ENCODE measurements at regions of chr6 and their contacts with region 1.

Region 1: GRCh38 chr6:153947808-153948447 is 91.1 kb upstream of the OPRM1 start:
- H3K4me3 ChIP-seq: no peak overlapping the region
- H3K27ac ChIP-seq: no peak overlapping the region
- H3K4me1 ChIP-seq: no peaks in the 10 kb centered on the region
- CTCF ChIP-seq: no peak

Region 2: DNA sequence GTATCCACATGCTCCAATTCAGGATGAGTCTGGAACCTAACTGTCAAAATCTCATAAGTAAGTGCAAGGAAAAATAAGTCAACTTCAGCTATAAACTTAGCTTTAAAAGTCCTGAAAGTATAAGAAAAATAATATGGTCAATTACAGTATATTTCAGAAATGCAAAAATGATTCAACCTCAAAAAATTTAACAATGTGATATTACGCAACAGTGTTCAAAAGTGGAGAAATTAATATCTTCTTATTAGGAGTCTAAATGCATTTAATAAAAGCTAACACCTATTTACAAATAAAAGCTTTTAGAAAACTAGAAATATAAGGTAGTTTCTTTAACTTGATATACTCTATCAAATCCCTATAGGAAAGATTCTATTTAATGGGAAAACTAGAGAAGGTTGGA is 20.1 kb before region 1 on chr6:
- CTCF ChIA-PET with region 1: interaction called, 11 read pairs
- POLR2A ChIA-PET with region 1: no interaction called
- H3K4me3 ChIP-seq: no peak overlapping the region
- H3K27ac ChIP-seq: no peak overlapping the region
- H3K4me1 ChIP-seq: no peaks in the 10 kb centered on the region
- CTCF ChIP-seq: no peak

Region 3: GRCh38 chr6:153960281-153960680 is 12.4 kb after region 1 on chr6:
- CTCF ChIA-PET with region 1: interaction called, 13 read pairs
- POLR2A ChIA-PET with region 1: no interaction called
- H3K4me3 ChIP-seq: no peak overlapping the region
- H3K27ac ChIP-seq: no peak overlapping the region
- H3K4me1 ChIP-seq: no peaks in the 10 kb centered on the region
- CTCF ChIP-seq: no peak

Region 4: GRCh38 chr6:154017786-154018185 is 69.9 kb after region 1 on chr6:
- CTCF ChIA-PET with region 1: no interaction called
- POLR2A ChIA-PET with region 1: no interaction called
- H3K4me3 ChIP-seq: no peak overlapping the region
- H3K27ac ChIP-seq: no peak overlapping the region
- H3K4me1 ChIP-seq: no peaks in the 10 kb centered on the region
- CTCF ChIP-seq: no peak